ENCODE measurements at regions of chr2 and their contacts with region 1.

Region 1: GRCh38 chr2:203814661-203815540 is 52.7 kb upstream of the CTLA4 start:
- DNase-seq: peak; percentile 68
- ATAC-seq: peak; percentile 72
- H3K4me3 Mint-ChIP-seq: peak overlapping the region; percentile 34
- H3K27ac Mint-ChIP-seq: no peak overlapping the region
- H3K4me1 Mint-ChIP-seq: peaks cover 49% of the 10 kb centered on the region
- H3K27me3 Mint-ChIP-seq: peaks cover 7% of the 10 kb centered on the region

Region 2: DNA sequence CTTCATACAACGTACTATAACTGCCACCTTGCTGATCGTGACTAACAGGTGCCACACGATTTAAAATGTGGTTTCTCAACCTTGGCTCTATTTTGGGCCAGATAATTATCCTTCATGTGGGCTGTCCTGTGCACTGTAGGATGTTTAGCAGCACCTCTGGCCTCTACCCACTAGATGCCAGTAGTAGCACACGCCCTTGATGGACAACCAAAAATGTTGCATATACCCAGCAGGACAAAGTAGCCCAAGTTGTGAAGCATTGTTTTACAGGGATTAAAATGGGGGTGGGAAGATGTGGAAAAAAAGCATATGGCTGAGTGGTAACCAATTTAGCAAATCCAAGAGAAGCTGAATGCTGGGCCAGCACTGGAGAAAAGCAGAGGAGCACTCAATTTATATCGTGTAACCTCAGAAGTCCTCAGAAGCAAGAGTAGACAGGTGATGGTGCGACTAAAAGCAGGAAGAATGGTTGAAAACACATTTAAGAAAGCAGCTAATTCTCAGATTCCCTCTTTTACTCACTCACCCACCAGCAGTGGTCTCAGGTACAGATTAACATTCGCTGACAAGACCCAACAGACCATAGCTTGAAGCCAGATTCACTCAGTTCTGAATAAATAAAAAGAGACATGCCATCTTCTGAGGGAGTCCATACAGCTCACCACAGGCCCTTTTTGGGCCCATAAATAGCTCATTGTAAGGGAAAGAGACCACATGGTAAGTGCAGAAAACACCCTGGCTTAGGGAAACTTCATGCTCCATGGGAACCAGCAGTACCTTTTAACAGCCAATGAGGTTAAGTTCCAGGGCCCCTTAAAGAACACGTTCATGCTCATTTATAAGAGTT is 330.4 kb before region 1 on chr2:
- CTCF ChIA-PET with region 1: interaction called, 132 read pairs
- POLR2A ChIA-PET with region 1: interaction called, 5 read pairs
- DNase-seq: peak; percentile 61
- ATAC-seq: peak; percentile 77
- H3K4me3 Mint-ChIP-seq: no peak overlapping the region
- H3K27ac Mint-ChIP-seq: no peak overlapping the region
- H3K4me1 Mint-ChIP-seq: peaks cover 4% of the 10 kb centered on the region
- H3K27me3 Mint-ChIP-seq: no peaks in the 10 kb centered on the region

Region 3: DNA sequence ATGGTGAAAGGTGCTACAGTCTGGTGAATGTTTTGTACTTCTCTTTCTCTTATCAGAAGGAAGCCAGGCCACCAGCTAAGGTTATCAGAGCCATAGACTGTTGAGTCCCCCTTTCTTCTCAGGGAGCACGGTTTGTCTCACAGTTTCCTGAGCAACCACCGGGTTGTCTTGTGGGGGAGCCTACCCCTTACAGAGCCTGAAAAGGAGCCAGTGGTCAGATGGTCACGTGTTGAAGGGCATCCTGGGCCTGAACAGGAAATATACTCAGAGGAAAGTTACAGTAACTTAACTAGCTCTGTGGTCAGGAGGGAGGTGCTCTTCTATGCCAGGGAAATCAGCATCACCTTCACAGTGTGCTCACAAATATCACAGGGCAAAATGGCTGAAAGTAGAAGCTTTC is 96.8 kb before region 1 on chr2:
- CTCF ChIA-PET with region 1: interaction called, 20 read pairs
- POLR2A ChIA-PET with region 1: interaction called, 12 read pairs
- DNase-seq: peak; percentile 89
- ATAC-seq: peak; percentile 84
- H3K4me3 Mint-ChIP-seq: peak overlapping the region; percentile 62
- H3K27ac Mint-ChIP-seq: peak overlapping the region; percentile 90
- H3K4me1 Mint-ChIP-seq: peaks cover 95% of the 10 kb centered on the region
- H3K27me3 Mint-ChIP-seq: no peaks in the 10 kb centered on the region

Region 4: DNA sequence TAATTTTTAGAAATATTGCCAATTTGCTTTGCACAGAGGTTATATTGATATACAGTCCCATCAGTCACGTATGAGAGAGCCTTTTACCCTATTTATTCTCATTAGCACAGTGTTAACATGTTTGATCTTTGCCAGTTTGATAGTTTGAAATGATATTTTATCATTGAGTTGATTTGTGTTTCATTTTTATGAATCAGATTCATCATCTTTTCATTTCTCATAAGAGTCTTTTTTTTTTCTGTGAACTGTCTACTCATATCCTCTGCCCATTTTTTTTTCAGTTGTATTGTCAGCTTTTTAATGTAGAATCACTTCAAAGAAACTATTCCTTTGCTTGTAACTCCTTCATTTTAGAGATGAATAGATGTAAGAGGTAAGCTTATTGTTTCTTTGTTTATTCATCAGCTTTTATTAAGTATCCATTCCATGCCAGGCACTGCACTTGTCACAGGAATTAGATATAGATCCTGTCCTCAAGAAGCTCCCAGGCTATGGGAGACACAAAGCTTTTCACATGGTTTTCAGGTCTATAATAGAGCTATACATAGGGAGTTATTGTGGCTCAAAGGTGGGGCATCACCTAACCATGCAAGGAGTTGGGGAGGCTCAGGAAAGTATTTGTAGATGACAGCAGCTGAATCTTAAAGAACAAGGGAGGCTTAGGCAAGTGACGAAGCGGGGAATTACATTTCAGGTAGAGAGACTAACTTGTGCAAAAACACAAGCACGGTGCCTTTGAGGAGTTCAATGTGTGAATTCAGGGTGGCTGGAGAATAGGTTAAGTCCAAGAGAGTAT is 66.4 kb before region 1 on chr2:
- CTCF ChIA-PET with region 1: interaction called, 12 read pairs
- POLR2A ChIA-PET with region 1: interaction called, 3 read pairs
- DNase-seq: no peak
- ATAC-seq: no peak
- H3K4me3 Mint-ChIP-seq: no peak overlapping the region
- H3K27ac Mint-ChIP-seq: peak overlapping the region; percentile 11
- H3K4me1 Mint-ChIP-seq: peaks cover 51% of the 10 kb centered on the region
- H3K27me3 Mint-ChIP-seq: no peaks in the 10 kb centered on the region

Region 5: GRCh38 chr2:203830304-203831055 is 15.6 kb after region 1 on chr2:
- CTCF ChIA-PET with region 1: interaction called, 13 read pairs
- POLR2A ChIA-PET with region 1: interaction called, 3 read pairs
- DNase-seq: peak; percentile 45
- ATAC-seq: peak; percentile 84
- H3K4me3 Mint-ChIP-seq: peak overlapping the region; percentile 42
- H3K27ac Mint-ChIP-seq: peak overlapping the region; percentile 77
- H3K4me1 Mint-ChIP-seq: peaks cover 15% of the 10 kb centered on the region
- H3K27me3 Mint-ChIP-seq: no peaks in the 10 kb centered on the region

Region 6: DNA sequence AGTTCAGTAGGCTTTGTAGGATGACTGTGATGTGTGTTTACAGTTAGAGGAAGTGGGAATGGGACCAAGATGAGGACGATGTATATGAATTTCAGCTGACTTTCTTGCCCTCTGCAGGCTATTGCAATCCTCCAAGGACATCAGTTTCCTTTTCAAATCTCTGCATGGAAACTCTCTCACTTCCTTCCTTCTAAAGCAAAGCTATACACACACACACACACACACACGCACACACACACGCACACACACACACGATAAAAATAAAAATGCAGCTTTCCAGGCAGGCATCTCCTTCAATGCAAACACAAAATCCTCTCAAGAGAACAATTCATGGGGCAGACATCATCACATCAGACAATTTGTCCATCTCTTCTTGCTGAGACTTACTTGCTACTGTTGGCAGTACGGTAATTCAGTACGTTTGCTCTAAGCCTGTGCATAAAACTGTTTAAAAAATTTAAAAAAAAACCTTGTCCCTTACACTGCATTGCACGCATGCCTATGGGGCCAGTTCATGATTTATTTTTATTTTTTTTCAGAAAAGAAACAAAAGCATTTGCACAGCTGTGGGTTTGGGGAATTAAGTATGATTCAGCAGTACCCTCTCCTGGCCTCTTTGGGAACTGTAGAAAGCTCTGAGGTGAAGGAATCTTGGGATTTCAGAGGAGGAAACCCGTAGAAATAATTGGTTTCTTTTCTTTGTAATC is 94.5 kb after region 1 on chr2:
- CTCF ChIA-PET with region 1: interaction called, 77 read pairs
- POLR2A ChIA-PET with region 1: interaction called, 3 read pairs
- DNase-seq: no peak
- ATAC-seq: peak; percentile 67
- H3K4me3 Mint-ChIP-seq: no peak overlapping the region
- H3K27ac Mint-ChIP-seq: no peak overlapping the region
- H3K4me1 Mint-ChIP-seq: peaks cover 21% of the 10 kb centered on the region
- H3K27me3 Mint-ChIP-seq: peaks cover 8% of the 10 kb centered on the region

Region 7: GRCh38 chr2:204027091-204027490 is 212.2 kb after region 1 on chr2:
- CTCF ChIA-PET with region 1: no interaction called
- POLR2A ChIA-PET with region 1: no interaction called
- DNase-seq: peak; percentile 43
- ATAC-seq: peak; percentile 78
- H3K4me3 Mint-ChIP-seq: no peak overlapping the region
- H3K27ac Mint-ChIP-seq: peak overlapping the region; percentile 29
- H3K4me1 Mint-ChIP-seq: peaks cover 19% of the 10 kb centered on the region
- H3K27me3 Mint-ChIP-seq: no peaks in the 10 kb centered on the region